ENCODE measurements at regions of chr2 and their contacts with region 1.

Region 1: DNA sequence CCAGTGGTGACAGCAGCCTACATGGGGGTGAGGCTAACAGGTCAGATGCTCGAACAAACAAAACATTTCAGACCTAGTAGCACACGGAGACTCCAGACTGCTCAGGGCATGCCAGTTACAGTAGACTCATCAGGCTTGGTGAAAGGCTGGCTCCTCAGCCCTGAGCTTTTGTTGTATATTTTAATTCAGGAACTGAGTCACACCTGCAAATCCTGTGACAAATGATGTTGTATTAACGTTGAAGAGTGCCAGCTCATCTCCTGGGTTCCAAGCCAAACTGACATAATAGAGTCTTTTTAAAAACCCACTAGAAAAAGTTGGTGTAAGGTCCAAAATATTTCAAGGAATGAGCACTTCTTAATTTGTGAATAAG is 65.3 kb downstream of the C1D start:
- DNase-seq: peak; percentile 90
- H3K4me3 ChIP-seq: peak overlapping the region in 2 of 3 experiments; percentile 0 to 1
- H3K27ac ChIP-seq: peak overlapping the region; percentile 70
- H3K4me1 ChIP-seq: peaks cover 30% of the 10 kb centered on the region
- H3K27me3 ChIP-seq: no peaks in the 10 kb centered on the region
- CTCF ChIP-seq: no peak

Region 2: GRCh38 chr2:67965246-67965645 is 32.3 kb before region 1 on chr2:
- CTCF ChIA-PET with region 1: no interaction called
- dilution Hi-C with region 1: loop called (anchors 5 kb)
- in situ Hi-C with region 1: no loop called
- intact Hi-C with region 1: no loop called
- DNase-seq: peak; percentile 83
- H3K4me3 ChIP-seq: no peak overlapping the region
- H3K27ac ChIP-seq: peak overlapping the region; percentile 27
- H3K4me1 ChIP-seq: peaks cover 17% of the 10 kb centered on the region
- H3K27me3 ChIP-seq: no peaks in the 10 kb centered on the region
- CTCF ChIP-seq: no peak